Activated B cell treated with CpG ODN at 0.5 μM for 24 hours (primary cell): ENCODE measurements at regions of chr6 and their contacts with region 1.

Region 1: GRCh38 chr6:138001750-138002349 is 105.4 kb downstream of the PERP start:
- DNase-seq: no peak
- ATAC-seq: peak; percentile 57
- H3K4me3 Mint-ChIP-seq: no peak overlapping the region
- H3K27ac Mint-ChIP-seq: no peak overlapping the region
- H3K4me1 Mint-ChIP-seq: peaks cover 3% of the 10 kb centered on the region
- H3K27me3 Mint-ChIP-seq: peaks cover 5% of the 10 kb centered on the region
- CTCF ChIP-seq: peak; percentile 98

Region 2: GRCh38 chr6:136967876-136968752 is 1033.7 kb before region 1 on chr6:
- CTCF ChIA-PET with region 1: no interaction called
- POLR2A ChIA-PET with region 1: no interaction called
- intact Hi-C with region 1: loop called (anchors 5 kb)
- DNase-seq: peak; percentile 39
- ATAC-seq: peak; percentile 93
- H3K4me3 Mint-ChIP-seq: no peak overlapping the region
- H3K27ac Mint-ChIP-seq: no peak overlapping the region
- H3K4me1 Mint-ChIP-seq: peaks cover 4% of the 10 kb centered on the region
- H3K27me3 Mint-ChIP-seq: peaks cover 12% of the 10 kb centered on the region
- CTCF ChIP-seq: peak; percentile 22

Region 3: DNA sequence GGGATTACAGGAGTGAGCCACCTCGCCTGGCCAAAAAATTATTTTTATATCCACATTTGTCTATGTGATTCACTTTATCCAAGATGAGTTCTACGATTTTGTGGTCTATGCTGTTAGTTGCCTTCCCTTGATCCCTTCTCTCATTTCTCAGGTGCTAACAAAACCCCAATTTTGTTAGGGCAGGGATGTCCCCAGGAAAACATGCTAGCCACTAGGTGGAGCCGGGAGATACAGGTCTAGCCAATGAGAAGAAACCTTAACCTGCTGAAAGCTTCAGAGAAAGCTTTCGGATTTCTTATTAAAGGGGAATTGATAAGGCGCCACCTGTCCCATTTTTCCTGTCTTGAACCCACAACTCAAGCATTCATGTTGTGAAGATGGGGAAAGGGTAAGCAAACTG is 340.2 kb before region 1 on chr6:
- CTCF ChIA-PET with region 1: interaction called, 20 read pairs
- POLR2A ChIA-PET with region 1: no interaction called
- intact Hi-C with region 1: loop called (anchors 1 kb)
- DNase-seq: no peak
- ATAC-seq: peak; percentile 56
- H3K4me3 Mint-ChIP-seq: no peak overlapping the region
- H3K27ac Mint-ChIP-seq: no peak overlapping the region
- H3K4me1 Mint-ChIP-seq: no peaks in the 10 kb centered on the region
- H3K27me3 Mint-ChIP-seq: peaks cover 7% of the 10 kb centered on the region
- CTCF ChIP-seq: no peak

Region 4: DNA sequence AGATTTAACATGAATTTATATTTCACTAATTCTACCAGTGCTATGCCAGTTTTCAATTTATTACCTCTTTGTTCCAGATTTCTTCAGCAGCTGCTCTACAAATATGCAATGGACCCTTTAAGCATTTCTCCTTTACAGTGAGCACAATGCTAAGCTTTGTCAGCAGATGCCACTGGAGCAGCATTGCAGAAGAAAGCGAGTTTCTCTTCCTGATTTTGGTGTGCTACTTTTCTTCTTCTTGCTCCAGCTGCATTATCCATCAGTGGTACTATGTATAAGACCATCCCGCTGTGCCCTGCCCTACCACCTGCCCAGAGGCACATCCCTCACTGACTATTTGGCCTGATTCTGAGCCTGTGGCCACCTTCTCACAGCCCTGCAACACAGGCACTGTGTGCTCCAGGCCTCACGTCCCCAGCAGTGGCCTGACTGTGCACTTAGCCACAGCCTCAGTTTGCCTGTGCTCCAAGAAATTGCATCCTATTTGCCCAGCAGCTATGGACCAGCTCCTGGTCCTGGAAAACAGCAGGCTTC is 50.7 kb before region 1 on chr6:
- CTCF ChIA-PET with region 1: interaction called, 10 read pairs
- POLR2A ChIA-PET with region 1: no interaction called
- intact Hi-C with region 1: loop called (anchors 1 kb)
- DNase-seq: no peak
- ATAC-seq: peak; percentile 72
- H3K4me3 Mint-ChIP-seq: no peak overlapping the region
- H3K27ac Mint-ChIP-seq: peak overlapping the region; percentile 31
- H3K4me1 Mint-ChIP-seq: peaks cover 22% of the 10 kb centered on the region
- H3K27me3 Mint-ChIP-seq: no peaks in the 10 kb centered on the region
- CTCF ChIP-seq: no peak

Region 5: DNA sequence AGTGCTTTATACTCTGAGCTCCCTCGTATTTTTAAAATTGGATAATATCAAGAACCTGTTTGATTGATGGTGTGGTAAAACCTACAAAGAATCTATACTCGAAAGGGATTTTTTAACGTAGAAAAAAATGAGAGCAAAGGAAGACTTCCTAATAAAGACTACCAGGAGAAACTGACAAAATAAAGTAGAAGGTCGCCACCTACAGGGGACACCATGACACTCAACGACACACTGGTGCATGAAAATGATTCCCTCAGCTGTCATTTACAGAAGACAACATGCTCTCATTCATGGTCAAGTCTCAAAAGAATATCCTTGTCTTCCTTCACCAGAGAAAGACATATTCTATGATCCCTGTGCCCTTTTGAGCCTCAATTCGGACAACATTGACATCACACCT is 507.5 kb after region 1 on chr6:
- CTCF ChIA-PET with region 1: no interaction called
- POLR2A ChIA-PET with region 1: no interaction called
- intact Hi-C with region 1: loop called (anchors 10 kb)
- DNase-seq: no peak
- ATAC-seq: no peak
- H3K4me3 Mint-ChIP-seq: no peak overlapping the region
- H3K27ac Mint-ChIP-seq: no peak overlapping the region
- H3K4me1 Mint-ChIP-seq: peaks cover 2% of the 10 kb centered on the region
- H3K27me3 Mint-ChIP-seq: peaks cover 15% of the 10 kb centered on the region
- CTCF ChIP-seq: no peak